Activated CD8-positive, alpha-beta T cell treated with anti-CD3 and anti-CD28 coated beads, Interleukin-2, amount 10 ng/mL, durations not matched to agents 7 days and 5 days (primary cell): ENCODE measurements at regions of chr2 and their contacts with region 1.

Region 1: DNA sequence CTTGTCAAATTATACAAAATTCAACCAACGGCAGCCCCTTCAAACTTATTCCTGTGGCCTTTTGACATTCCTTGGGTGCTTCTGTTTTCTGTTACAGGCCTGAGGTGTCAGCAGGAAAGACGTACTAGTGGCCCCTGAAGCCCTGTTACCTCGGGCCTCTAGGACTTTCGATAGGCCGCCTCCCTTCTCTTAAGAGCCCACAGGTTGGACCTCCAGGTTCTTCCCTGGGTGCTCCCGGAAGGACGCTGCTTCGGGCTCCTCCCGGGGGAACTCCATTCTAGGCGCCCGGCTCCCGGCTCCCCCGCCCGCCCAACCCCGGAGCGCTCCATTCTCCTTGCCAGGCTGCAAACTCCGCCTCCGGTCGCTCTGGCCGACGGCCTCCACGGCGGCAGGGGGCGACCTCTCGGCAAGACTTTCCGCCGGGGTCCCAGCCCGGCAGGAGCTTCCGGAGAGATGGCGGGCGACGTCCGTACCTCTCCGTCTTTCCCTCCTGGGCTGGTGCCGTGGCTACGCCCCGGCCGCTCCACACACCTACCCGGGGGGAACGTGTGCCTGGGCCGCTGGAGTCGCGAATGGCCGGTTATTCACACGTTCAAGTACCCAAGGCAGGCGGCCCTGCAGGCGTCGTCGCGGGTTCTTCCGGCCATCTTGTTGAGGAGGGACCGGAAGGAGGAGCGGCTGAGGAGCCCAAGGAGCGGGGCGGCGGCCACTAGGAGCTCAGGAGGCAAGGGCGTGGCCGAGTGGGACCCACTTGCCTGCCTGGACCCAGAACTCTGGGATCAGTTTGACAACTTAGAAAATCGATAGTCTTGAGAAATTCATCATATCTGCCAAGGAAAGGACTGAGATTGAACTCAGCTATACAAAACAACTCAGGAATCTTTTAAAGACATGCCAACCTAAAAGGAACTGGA is 27.5 kb downstream of the BOLA3 start:
- DNase-seq: peak; percentile 88
- ATAC-seq: peak; percentile 97
- H3K4me3 Mint-ChIP-seq: peak overlapping the region; percentile 82
- H3K27ac Mint-ChIP-seq: peak overlapping the region; percentile 96
- H3K4me1 Mint-ChIP-seq: peaks cover 11% of the 10 kb centered on the region
- H3K27me3 Mint-ChIP-seq: peaks cover 2% of the 10 kb centered on the region

Region 2: GRCh38 chr2:74080346-74080745 is 39.8 kb before region 1 on chr2:
- CTCF ChIA-PET with region 1: no interaction called
- POLR2A ChIA-PET with region 1: no interaction called
- DNase-seq: no peak
- ATAC-seq: no peak
- H3K4me3 Mint-ChIP-seq: no peak overlapping the region
- H3K27ac Mint-ChIP-seq: no peak overlapping the region
- H3K4me1 Mint-ChIP-seq: no peaks in the 10 kb centered on the region
- H3K27me3 Mint-ChIP-seq: no peaks in the 10 kb centered on the region

Region 3: DNA sequence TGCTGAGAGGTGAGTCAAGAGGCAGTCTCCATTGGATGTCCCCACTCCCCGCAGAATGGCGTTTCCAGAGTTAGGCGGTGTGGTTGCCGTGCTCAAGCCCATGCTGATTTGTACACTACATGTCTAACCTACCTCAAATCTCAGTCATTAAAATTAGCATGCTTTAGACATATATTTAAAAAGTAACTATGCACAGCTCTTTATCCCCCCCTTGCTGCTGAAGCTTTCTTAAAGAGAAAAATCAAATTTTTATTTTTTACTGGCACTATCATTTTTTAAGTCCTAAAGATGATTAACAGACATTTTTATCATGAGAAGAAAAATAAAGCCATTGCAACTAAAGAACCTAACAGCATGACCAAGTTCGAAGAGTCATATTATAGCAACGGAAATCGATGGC is 15.3 kb before region 1 on chr2:
- CTCF ChIA-PET with region 1: interaction called, 13 read pairs
- POLR2A ChIA-PET with region 1: no interaction called
- DNase-seq: no peak
- ATAC-seq: no peak
- H3K4me3 Mint-ChIP-seq: no peak overlapping the region
- H3K27ac Mint-ChIP-seq: peak overlapping the region; percentile 23
- H3K4me1 Mint-ChIP-seq: no peaks in the 10 kb centered on the region
- H3K27me3 Mint-ChIP-seq: no peaks in the 10 kb centered on the region

Region 4: GRCh38 chr2:74212702-74213410 is 92.7 kb after region 1 on chr2:
- CTCF ChIA-PET with region 1: no interaction called
- POLR2A ChIA-PET with region 1: no interaction called
- DNase-seq: no peak
- ATAC-seq: no peak
- H3K4me3 Mint-ChIP-seq: no peak overlapping the region
- H3K27ac Mint-ChIP-seq: no peak overlapping the region
- H3K4me1 Mint-ChIP-seq: peaks cover 14% of the 10 kb centered on the region
- H3K27me3 Mint-ChIP-seq: no peaks in the 10 kb centered on the region